B cell (primary cell): ENCODE measurements at regions of chr16 and their contacts with region 1.

Region 1: GRCh38 chr16:684067-684794 is at the start of gene JMJD8:
- DNase-seq: peak; percentile 98
- ATAC-seq: peak; percentile 48
- H3K4me3 ChIP-seq: peak within 1 kb of the TSS in 4 of 5 experiments; percentile 57 to 72 (median 63)
- H3K4me3 Mint-ChIP-seq: peak within 1 kb of the TSS; percentile 86
- H3K27ac ChIP-seq: peak within 1 kb of the TSS; percentile 64 to 89
- H3K27ac Mint-ChIP-seq: peak within 1 kb of the TSS; percentile 91
- H3K4me1 ChIP-seq: peaks cover 31 to 48% of the 10 kb centered on the region in 2 donors
- H3K4me1 Mint-ChIP-seq: peaks cover 32% of the 10 kb centered on the region
- H3K27me3 ChIP-seq: no peaks in the 10 kb centered on the region
- H3K27me3 Mint-ChIP-seq: no peaks in the 10 kb centered on the region
- CTCF ChIP-seq: no peak
- total RNA-seq, gene JMJD8: 41.3 and 46.3 TPM in 2 replicates

Region 2: DNA sequence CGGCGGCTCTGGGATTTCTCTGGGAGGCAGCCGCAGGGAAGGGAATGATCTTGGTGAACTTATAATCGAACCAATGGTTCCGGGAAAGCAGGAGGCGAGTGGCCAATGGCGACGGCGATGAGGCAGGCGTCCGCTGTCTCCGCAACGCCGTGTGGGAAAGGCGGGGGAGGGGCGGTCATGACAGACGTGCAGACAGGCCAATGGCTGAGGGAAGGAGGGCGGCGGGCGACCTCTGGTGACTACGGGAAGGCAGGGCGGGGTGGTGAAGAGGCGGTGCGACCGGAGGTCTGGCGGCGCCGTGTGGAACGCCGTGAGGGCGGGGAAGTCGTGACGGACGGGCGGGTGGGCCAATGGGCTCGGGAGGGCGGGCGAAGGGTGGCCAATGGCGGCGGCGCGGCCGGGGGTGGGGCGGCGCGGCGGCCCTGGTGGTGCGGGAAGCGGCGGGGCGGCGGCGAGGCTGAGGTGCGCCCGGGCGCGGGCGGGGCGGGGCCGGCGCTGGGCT is 94.5 kb before region 1 on chr16 and contains the start of gene RAB40C:
- CTCF ChIA-PET with region 1: no interaction called
- POLR2A ChIA-PET with region 1: no interaction called
- intact Hi-C with region 1: loop called (anchors 2 kb)
- DNase-seq: peak; percentile 100
- ATAC-seq: peak; percentile 84
- H3K4me3 ChIP-seq: peak within 1 kb of the TSS; percentile 66 to 89 (median 78)
- H3K4me3 Mint-ChIP-seq: peak within 1 kb of the TSS; percentile 94
- H3K27ac ChIP-seq: peak within 1 kb of the TSS; percentile 85 to 88
- H3K27ac Mint-ChIP-seq: peak within 1 kb of the TSS; percentile 99
- H3K4me1 ChIP-seq: peaks cover 14 to 30% of the 10 kb centered on the region in 2 donors
- H3K4me1 Mint-ChIP-seq: peaks cover 50% of the 10 kb centered on the region
- H3K27me3 ChIP-seq: peaks cover 0 to 2% (median 0%) of the 10 kb centered on the region in 4 experiments
- H3K27me3 Mint-ChIP-seq: no peaks in the 10 kb centered on the region
- CTCF ChIP-seq: no peak
- total RNA-seq, gene RAB40C: 25.5 and 26.9 TPM in 2 replicates

Region 3: DNA sequence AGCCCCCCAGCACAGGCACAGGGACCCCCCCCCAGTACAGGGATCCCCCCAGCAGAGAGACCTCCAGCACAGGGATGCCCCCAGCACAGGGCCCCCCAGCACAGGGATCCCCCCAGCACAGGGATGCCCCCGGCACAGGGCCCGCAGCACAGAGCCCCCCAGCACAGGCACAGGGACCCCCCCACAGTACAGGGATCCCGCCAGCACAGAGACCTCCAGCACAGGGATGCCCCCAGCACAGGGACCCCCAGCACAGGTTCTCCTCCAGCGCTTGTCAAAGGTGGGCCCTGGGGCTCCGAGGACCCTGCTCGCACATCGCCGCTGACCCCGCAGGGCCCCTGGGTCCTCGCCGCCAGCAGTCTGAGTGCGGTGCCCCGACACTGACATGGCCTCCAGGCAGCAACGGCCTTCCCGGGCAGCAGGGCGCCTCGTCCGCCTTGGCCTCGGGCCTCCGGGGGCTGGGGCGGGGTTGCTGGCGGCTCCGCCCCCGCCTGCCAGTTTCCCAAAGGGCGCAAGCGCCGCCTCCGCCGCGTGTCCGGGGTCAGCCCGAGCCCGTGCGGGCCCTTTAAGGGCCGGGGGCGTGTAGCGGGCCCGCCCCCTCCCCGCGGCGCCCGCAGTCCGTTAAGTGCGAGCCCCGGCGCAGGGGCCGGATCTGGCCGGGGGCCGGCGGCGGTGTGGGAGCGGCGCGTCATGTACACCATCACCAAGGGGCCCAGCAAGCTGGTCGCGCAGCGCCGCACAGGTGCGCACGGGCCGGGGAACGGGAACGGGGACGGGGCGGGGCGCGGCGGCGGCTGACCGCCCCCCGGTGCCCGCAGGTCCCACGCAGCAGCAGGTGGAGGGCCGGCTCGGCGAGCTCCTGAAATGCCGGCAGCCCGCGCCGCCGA is 42.7 kb before region 1 on chr16 and contains the start of gene MCRIP2:
- CTCF ChIA-PET with region 1: interaction called, 3 read pairs
- POLR2A ChIA-PET with region 1: no interaction called
- intact Hi-C with region 1: loop called (anchors 1 kb)
- DNase-seq: peak; percentile 73
- ATAC-seq: peak; percentile 41
- H3K4me3 ChIP-seq: peak within 1 kb of the TSS in 4 of 5 experiments; percentile 42 to 75 (median 60)
- H3K4me3 Mint-ChIP-seq: peak within 1 kb of the TSS; percentile 74
- H3K27ac ChIP-seq: peak within 1 kb of the TSS; percentile 18 to 41
- H3K27ac Mint-ChIP-seq: peak within 1 kb of the TSS; percentile 61
- H3K4me1 ChIP-seq: peaks cover 15 to 44% of the 10 kb centered on the region in 2 donors
- H3K4me1 Mint-ChIP-seq: peaks cover 23% of the 10 kb centered on the region
- H3K27me3 ChIP-seq: no peaks in the 10 kb centered on the region
- H3K27me3 Mint-ChIP-seq: no peaks in the 10 kb centered on the region
- CTCF ChIP-seq: no peak
- total RNA-seq, gene MCRIP2: 29.2 and 31.6 TPM in 2 replicates

Region 4: GRCh38 chr16:660459-661183 is 23.6 kb before region 1 on chr16:
- CTCF ChIA-PET with region 1: interaction called, 3 read pairs
- POLR2A ChIA-PET with region 1: interaction called, 3 read pairs
- intact Hi-C with region 1: loop called (anchors 2 kb)
- DNase-seq: peak; percentile 81
- ATAC-seq: peak; percentile 90
- H3K4me3 ChIP-seq: peak overlapping the region in 4 of 5 experiments; percentile 9 to 35 (median 24)
- H3K4me3 Mint-ChIP-seq: peak overlapping the region; percentile 52
- H3K27ac ChIP-seq: peak overlapping the region in 1 of 2 donors; percentile 43
- H3K27ac Mint-ChIP-seq: peak overlapping the region; percentile 56
- H3K4me1 ChIP-seq: peaks cover 10 to 17% of the 10 kb centered on the region in 2 donors
- H3K4me1 Mint-ChIP-seq: peaks cover 10% of the 10 kb centered on the region
- H3K27me3 ChIP-seq: no peaks in the 10 kb centered on the region
- H3K27me3 Mint-ChIP-seq: no peaks in the 10 kb centered on the region
- CTCF ChIP-seq: peak; percentile 57

Region 5: DNA sequence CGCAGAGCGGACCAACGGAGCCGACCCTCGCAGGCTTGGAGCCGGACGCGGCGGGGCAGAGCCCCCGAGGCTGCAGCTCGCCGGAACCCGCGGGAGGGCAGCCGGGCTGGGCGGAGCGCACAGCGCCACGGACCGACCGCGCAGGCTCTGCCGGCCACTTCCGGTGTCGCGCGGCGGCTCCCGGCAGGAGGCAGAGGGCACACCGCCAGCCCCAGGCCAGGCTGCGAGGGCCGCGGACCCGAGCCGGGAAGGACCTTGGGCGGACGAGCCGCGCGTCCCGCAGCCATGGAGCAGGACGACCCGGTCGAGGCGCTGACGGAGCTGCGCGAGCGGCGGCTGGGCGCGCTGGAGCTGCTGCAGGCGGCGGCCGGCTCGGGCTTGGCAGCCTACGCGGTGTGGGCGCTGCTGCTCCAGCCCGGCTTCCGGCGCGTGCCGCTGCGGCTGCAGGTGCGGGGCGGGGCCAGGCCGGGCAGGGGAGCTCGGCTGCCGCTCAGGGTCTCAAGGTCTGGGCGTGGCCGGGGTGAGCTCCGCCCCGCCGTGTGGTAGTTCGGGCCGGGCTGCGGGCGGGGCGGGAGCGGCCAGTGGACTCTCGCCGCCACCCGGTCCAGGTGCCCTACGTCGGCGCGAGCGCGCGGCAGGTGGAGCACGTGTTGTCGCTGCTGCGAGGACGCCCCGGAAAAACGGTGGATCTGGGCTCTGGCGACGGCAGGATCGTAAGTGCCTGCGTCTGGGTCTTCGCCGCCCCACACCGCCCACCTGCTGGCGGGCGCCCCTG is 36.9 kb after region 1 on chr16 and contains the start of gene ANTKMT:
- CTCF ChIA-PET with region 1: interaction called, 3 read pairs
- POLR2A ChIA-PET with region 1: interaction called, 3 read pairs
- intact Hi-C with region 1: loop called (anchors 5 kb)
- DNase-seq: peak; percentile 92
- ATAC-seq: peak; percentile 86
- H3K4me3 ChIP-seq: peak within 1 kb of the TSS; percentile 34 to 76 (median 73)
- H3K4me3 Mint-ChIP-seq: peak within 1 kb of the TSS; percentile 84
- H3K27ac ChIP-seq: peak within 1 kb of the TSS; percentile 54 to 86
- H3K27ac Mint-ChIP-seq: peak within 1 kb of the TSS; percentile 80
- H3K4me1 ChIP-seq: peaks cover 21 to 38% of the 10 kb centered on the region in 2 donors
- H3K4me1 Mint-ChIP-seq: peaks cover 21% of the 10 kb centered on the region
- H3K27me3 ChIP-seq: peaks cover 0 to 6% (median 3%) of the 10 kb centered on the region in 4 experiments
- H3K27me3 Mint-ChIP-seq: no peaks in the 10 kb centered on the region
- CTCF ChIP-seq: no peak
- total RNA-seq, gene ANTKMT: 41.0 and 53.6 TPM in 2 replicates

Region 6: GRCh38 chr16:1677802-1678496 is 993.7 kb after region 1 on chr16 and contains the start of gene JPT2:
- CTCF ChIA-PET with region 1: no interaction called
- POLR2A ChIA-PET with region 1: no interaction called
- intact Hi-C with region 1: loop called (anchors 5 kb)
- DNase-seq: peak; percentile 98
- ATAC-seq: peak; percentile 94
- H3K4me3 ChIP-seq: peak within 1 kb of the TSS; percentile 38 to 77 (median 60)
- H3K4me3 Mint-ChIP-seq: peak within 1 kb of the TSS; percentile 89
- H3K27ac ChIP-seq: peak within 1 kb of the TSS in 1 of 2 donors; percentile 83
- H3K27ac Mint-ChIP-seq: peak within 1 kb of the TSS; percentile 88
- H3K4me1 ChIP-seq: peaks cover 8 to 14% of the 10 kb centered on the region in 2 donors
- H3K4me1 Mint-ChIP-seq: peaks cover 14% of the 10 kb centered on the region
- H3K27me3 ChIP-seq: no peaks in the 10 kb centered on the region
- H3K27me3 Mint-ChIP-seq: no peaks in the 10 kb centered on the region
- CTCF ChIP-seq: no peak
- total RNA-seq, gene JPT2: 42.1 and 45.7 TPM in 2 replicates